CD4-positive, alpha-beta T cell (primary cell): ENCODE measurements at regions of chr11 and their contacts with region 1.

Region 1: DNA sequence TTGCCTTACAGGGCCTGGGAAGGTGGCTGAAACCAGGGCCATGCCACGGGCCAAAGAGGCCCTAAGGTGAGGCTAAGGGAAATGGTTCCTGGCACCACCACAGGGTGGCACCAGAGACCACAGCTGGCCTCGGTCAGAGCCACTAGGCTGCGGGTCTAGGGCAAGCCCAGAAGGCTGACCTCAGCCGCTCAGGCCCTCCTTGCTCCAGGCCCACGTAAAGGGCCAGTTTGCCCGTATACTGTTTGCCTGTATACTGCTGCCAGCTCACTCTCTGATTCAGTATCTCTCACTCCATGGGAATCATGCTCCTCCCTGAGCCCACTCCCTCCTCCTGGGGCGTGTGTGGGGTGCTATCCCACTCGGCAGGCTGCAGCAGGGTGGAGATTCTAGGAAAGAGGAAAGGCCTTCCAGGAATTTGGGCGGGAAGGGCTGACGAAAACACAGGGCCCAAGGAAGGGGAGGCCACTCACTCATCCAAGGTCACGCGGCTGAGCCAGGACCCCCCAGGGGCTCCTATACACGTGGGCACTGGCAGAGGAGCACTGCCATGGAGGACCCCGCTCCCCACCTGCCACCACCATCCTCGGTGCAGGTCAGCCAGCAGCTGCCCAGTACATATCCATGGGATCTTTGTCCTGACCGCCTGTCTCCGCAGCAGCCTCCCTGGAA is 62.4 kb downstream of the NECTIN1 start:
- DNase-seq: peak; percentile 32 to 74 (median 47)
- ATAC-seq: peak; percentile 66
- H3K4me3 ChIP-seq: no peak overlapping the region
- H3K4me3 Mint-ChIP-seq: no peak overlapping the region
- H3K27ac ChIP-seq: no peak overlapping the region
- H3K27ac Mint-ChIP-seq: no peak overlapping the region
- H3K4me1 ChIP-seq: no peaks in the 10 kb centered on the region
- H3K4me1 Mint-ChIP-seq: no peaks in the 10 kb centered on the region
- H3K27me3 ChIP-seq: no peaks in the 10 kb centered on the region
- H3K27me3 Mint-ChIP-seq: no peaks in the 10 kb centered on the region
- CTCF ChIP-seq: peak; percentile 69

Region 2: DNA sequence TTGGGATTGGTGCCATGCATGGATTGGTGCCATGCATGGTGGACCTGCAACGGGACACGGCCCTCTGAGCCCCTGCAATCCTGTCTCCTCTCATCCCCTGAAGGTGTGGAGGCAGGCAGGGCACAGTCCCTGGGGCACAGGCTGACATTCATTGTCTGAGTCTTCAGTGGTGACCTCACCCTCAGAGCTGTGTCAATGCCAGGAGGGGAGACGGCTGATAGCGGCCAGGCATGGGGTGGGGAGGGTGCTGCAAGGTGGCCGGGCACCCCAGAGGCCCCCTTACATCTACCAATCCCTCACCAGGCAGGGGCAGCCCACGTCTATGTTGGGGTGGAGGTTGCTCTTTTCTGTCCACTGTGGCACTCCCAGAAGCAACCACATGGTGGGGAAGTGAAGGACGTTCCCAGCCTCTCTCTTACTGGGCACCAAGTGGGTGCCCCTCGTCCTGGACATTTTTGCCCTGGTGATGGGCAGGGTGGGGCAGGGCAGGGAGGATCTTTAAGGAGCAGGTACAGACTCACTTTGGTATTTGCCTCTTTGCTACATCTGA is 14.8 kb after region 1 on chr11:
- CTCF ChIA-PET with region 1: no interaction called
- POLR2A ChIA-PET with region 1: no interaction called
- intact Hi-C with region 1: no loop called
- DNase-seq: no peak
- ATAC-seq: no peak
- H3K4me3 ChIP-seq: no peak overlapping the region
- H3K4me3 Mint-ChIP-seq: no peak overlapping the region
- H3K27ac ChIP-seq: no peak overlapping the region
- H3K27ac Mint-ChIP-seq: no peak overlapping the region
- H3K4me1 ChIP-seq: peaks cover 16% of the 10 kb centered on the region
- H3K4me1 Mint-ChIP-seq: no peaks in the 10 kb centered on the region
- H3K27me3 ChIP-seq: no peaks in the 10 kb centered on the region
- H3K27me3 Mint-ChIP-seq: no peaks in the 10 kb centered on the region
- CTCF ChIP-seq: no peak

Region 3: GRCh38 chr11:119741369-119742262 is 75.0 kb after region 1 on chr11:
- CTCF ChIA-PET with region 1: no interaction called
- POLR2A ChIA-PET with region 1: no interaction called
- intact Hi-C with region 1: loop called (anchors 1 kb)
- DNase-seq: peak; percentile 38 to 79 (median 49)
- ATAC-seq: peak; percentile 84
- H3K4me3 ChIP-seq: no peak overlapping the region
- H3K4me3 Mint-ChIP-seq: peak overlapping the region; percentile 17
- H3K27ac ChIP-seq: no peak overlapping the region
- H3K27ac Mint-ChIP-seq: no peak overlapping the region
- H3K4me1 ChIP-seq: peaks cover 21% of the 10 kb centered on the region
- H3K4me1 Mint-ChIP-seq: peaks cover 5% of the 10 kb centered on the region
- H3K27me3 ChIP-seq: peaks cover 40 to 44% of the 10 kb centered on the region in 2 experiments
- H3K27me3 Mint-ChIP-seq: peaks cover 85% of the 10 kb centered on the region
- CTCF ChIP-seq: peak; percentile 67

Region 4: GRCh38 chr11:120079750-120080490 is 413.3 kb after region 1 on chr11:
- CTCF ChIA-PET with region 1: no interaction called
- POLR2A ChIA-PET with region 1: no interaction called
- intact Hi-C with region 1: loop called in 1 of 2 experiments (anchors 1 kb)
- DNase-seq: peak in 5 of 14 experiments; percentile 8 to 37 (median 33)
- ATAC-seq: no peak
- H3K4me3 ChIP-seq: no peak overlapping the region
- H3K4me3 Mint-ChIP-seq: no peak overlapping the region
- H3K27ac ChIP-seq: no peak overlapping the region
- H3K27ac Mint-ChIP-seq: no peak overlapping the region
- H3K4me1 ChIP-seq: no peaks in the 10 kb centered on the region
- H3K4me1 Mint-ChIP-seq: no peaks in the 10 kb centered on the region
- H3K27me3 ChIP-seq: no peaks in the 10 kb centered on the region
- H3K27me3 Mint-ChIP-seq: peaks cover 34% of the 10 kb centered on the region
- CTCF ChIP-seq: peak; percentile 44

Region 5: GRCh38 chr11:120229451-120230424 is 563.1 kb after region 1 on chr11:
- CTCF ChIA-PET with region 1: no interaction called
- POLR2A ChIA-PET with region 1: no interaction called
- intact Hi-C with region 1: loop called in 1 of 2 experiments (anchors 5 kb)
- DNase-seq: peak in 4 of 14 experiments; percentile 10 to 47 (median 30)
- ATAC-seq: no peak
- H3K4me3 ChIP-seq: no peak overlapping the region
- H3K4me3 Mint-ChIP-seq: no peak overlapping the region
- H3K27ac ChIP-seq: no peak overlapping the region
- H3K27ac Mint-ChIP-seq: no peak overlapping the region
- H3K4me1 ChIP-seq: no peaks in the 10 kb centered on the region
- H3K4me1 Mint-ChIP-seq: no peaks in the 10 kb centered on the region
- H3K27me3 ChIP-seq: peaks cover 6 to 7% of the 10 kb centered on the region in 2 experiments
- H3K27me3 Mint-ChIP-seq: peaks cover 27% of the 10 kb centered on the region
- CTCF ChIP-seq: peak; percentile 52